ENCODE measurements at regions of chr10 and their contacts with region 1.

Region 1: GRCh38 chr10:30803892-30804322 is 174.4 kb upstream of the LYZL2 start:
- DNase-seq: peak; percentile 64
- H3K4me3 ChIP-seq: no peak overlapping the region
- H3K27ac ChIP-seq: peak overlapping the region in 1 of 2 donors; percentile 41
- H3K4me1 ChIP-seq: peaks cover 10% of the 10 kb centered on the region
- H3K27me3 ChIP-seq: no peaks in the 10 kb centered on the region
- CTCF ChIP-seq: no peak
- POLR2A ChIP-seq: no peak

Region 2: DNA sequence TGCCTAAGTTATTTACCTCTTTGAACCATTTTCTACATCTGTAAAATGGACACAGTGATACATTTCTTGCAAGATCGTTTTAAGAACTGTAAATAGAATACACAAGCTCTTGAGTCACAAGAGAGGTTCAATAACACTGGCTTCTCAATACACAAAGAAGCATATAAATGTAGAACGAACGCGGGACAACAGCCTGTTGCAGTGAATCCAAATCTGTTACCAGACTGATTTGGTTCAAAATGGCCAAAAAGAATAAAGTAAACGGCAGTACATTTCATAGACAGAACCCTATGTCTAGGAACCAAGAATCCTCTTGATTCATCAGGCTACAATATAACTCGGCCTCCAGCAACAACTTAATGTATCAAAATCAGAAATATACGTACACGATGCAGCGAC is 455.5 kb before region 1 on chr10:
- intact Hi-C with region 1: no loop called
- DNase-seq: no peak
- H3K4me3 ChIP-seq: peak overlapping the region; percentile 91 to 93
- H3K27ac ChIP-seq: peak overlapping the region; percentile 71 to 87
- H3K4me1 ChIP-seq: peaks cover 13% of the 10 kb centered on the region
- H3K27me3 ChIP-seq: no peaks in the 10 kb centered on the region
- CTCF ChIP-seq: no peak
- POLR2A ChIP-seq: no peak

Region 3: GRCh38 chr10:30630571-30630970 is 173.3 kb before region 1 on chr10:
- intact Hi-C with region 1: no loop called
- DNase-seq: no peak
- H3K4me3 ChIP-seq: no peak overlapping the region
- H3K27ac ChIP-seq: no peak overlapping the region
- H3K4me1 ChIP-seq: no peaks in the 10 kb centered on the region
- H3K27me3 ChIP-seq: no peaks in the 10 kb centered on the region
- CTCF ChIP-seq: no peak
- POLR2A ChIP-seq: no peak

Region 4: GRCh38 chr10:30675791-30676718 is 127.9 kb before region 1 on chr10:
- intact Hi-C with region 1: no loop called
- DNase-seq: no peak
- H3K4me3 ChIP-seq: no peak overlapping the region
- H3K27ac ChIP-seq: no peak overlapping the region
- H3K4me1 ChIP-seq: no peaks in the 10 kb centered on the region
- H3K27me3 ChIP-seq: no peaks in the 10 kb centered on the region
- CTCF ChIP-seq: no peak
- POLR2A ChIP-seq: no peak

Region 5: DNA sequence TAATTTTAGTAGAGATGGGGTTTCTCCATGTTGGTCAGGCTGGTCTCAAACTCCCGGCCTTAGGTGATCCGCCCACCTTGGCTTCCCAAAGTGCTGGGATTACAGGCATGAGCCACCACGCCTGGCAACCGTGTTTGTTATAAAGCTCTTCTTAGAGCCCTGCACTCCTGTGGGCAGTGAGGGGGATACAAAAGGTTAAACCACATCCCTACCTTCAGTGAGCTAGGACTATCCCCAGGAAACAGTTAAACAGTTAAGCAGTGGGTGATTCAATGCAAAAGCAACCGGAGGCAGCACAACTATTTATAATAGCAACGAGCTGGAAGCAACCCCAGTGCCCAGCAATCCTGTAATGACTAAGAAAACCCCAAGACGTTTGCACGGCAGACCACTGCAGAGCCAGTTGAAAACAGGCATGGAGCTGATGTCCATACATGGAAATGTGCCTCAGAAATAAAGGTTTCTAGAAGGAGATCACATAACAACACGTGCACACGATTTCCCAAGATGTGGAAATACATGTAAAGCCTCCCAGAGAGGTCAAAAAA is 67.1 kb before region 1 on chr10:
- intact Hi-C with region 1: no loop called
- DNase-seq: no peak
- H3K4me3 ChIP-seq: no peak overlapping the region
- H3K27ac ChIP-seq: no peak overlapping the region
- H3K4me1 ChIP-seq: no peaks in the 10 kb centered on the region
- H3K27me3 ChIP-seq: no peaks in the 10 kb centered on the region
- CTCF ChIP-seq: no peak
- POLR2A ChIP-seq: no peak

Region 6: GRCh38 chr10:31020209-31020608 is 216.3 kb after region 1 on chr10:
- intact Hi-C with region 1: loop called (anchors 10 kb)
- DNase-seq: peak; percentile 28
- H3K4me3 ChIP-seq: no peak overlapping the region
- H3K27ac ChIP-seq: no peak overlapping the region
- H3K4me1 ChIP-seq: peaks cover 13% of the 10 kb centered on the region
- H3K27me3 ChIP-seq: no peaks in the 10 kb centered on the region
- CTCF ChIP-seq: no peak
- POLR2A ChIP-seq: no peak